Activated T-helper 2 cell treated with anti-CD3 and anti-CD28 coated beads, Interferon-gamma antibody, Interleukin-2, Interleukin-4, amounts not matched to agents 10 μg/mL and 5 μg/mL and 100 μg/mL, durations not matched to agents 14 hours and 24 hours and 36 hours (primary cell): ENCODE measurements at regions of chr2 and their contacts with region 1.

Region 1: GRCh38 chr2:233251306-233252116 is at the start of gene ATG16L1:
- DNase-seq: peak; percentile 94
- H3K4me3 Mint-ChIP-seq: peak within 1 kb of the TSS; percentile 92
- H3K27ac Mint-ChIP-seq: peak within 1 kb of the TSS; percentile 95
- H3K4me1 Mint-ChIP-seq: peaks cover 54% of the 10 kb centered on the region
- H3K27me3 Mint-ChIP-seq: no peaks in the 10 kb centered on the region
- total RNA-seq, gene ATG16L1: 33.5 and 35.5 TPM in 2 replicates

Region 2: DNA sequence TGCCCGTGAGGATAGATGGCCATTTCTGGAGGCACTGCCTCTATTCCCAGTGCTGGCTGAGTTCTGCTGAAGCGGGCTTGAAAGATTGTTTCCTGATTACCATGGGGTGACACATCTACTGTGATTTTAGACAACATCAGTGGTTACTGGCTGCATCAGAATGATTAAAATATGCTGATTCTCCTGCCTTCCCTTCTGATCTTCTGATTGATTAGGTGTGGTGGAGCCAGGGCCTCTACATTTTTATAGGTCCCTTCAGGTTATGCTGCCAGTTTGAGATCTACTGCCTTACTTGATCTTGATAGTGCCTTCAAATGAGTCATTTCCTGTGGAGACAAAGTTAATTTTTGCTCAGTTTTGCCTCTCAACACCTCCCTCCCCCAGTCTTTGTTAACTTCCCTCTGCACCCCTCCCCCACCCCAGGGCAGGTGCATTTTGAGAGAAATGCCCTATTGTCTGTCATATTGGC is 413.1 kb before region 1 on chr2:
- intact Hi-C with region 1: loop called (anchors 5 kb)
- DNase-seq: peak; percentile 46
- H3K4me3 Mint-ChIP-seq: peak overlapping the region; percentile 4
- H3K27ac Mint-ChIP-seq: peak overlapping the region; percentile 72
- H3K4me1 Mint-ChIP-seq: peaks cover 34% of the 10 kb centered on the region
- H3K27me3 Mint-ChIP-seq: no peaks in the 10 kb centered on the region

Region 3: GRCh38 chr2:233061591-233062450 is 189.7 kb before region 1 on chr2:
- intact Hi-C with region 1: loop called (anchors 5 kb)
- DNase-seq: peak; percentile 23
- H3K4me3 Mint-ChIP-seq: peak overlapping the region; percentile 91
- H3K27ac Mint-ChIP-seq: peak overlapping the region; percentile 88
- H3K4me1 Mint-ChIP-seq: peaks cover 38% of the 10 kb centered on the region
- H3K27me3 Mint-ChIP-seq: no peaks in the 10 kb centered on the region

Region 4: DNA sequence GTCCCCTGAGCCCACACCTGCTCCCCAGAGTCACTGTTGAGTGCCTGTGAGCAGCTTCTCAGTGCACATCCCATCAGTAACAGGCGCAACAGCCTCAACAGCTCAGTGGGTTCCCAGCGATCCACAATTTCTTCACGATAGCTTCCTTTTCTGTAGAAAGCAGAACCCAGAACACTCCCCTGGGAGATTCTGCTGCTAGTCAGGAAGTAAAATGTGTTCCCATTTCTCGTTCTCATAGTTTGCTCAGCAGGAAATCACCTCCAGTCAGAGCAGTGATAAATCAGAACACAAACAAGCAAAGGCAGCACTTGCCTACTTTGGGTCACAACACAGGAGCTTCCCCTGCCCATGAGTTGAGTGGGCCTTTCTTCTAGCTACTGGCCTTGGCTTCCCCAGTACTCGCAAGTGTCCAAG is 49.0 kb before region 1 on chr2:
- intact Hi-C with region 1: no loop called
- DNase-seq: no peak
- H3K4me3 Mint-ChIP-seq: no peak overlapping the region
- H3K27ac Mint-ChIP-seq: no peak overlapping the region
- H3K4me1 Mint-ChIP-seq: no peaks in the 10 kb centered on the region
- H3K27me3 Mint-ChIP-seq: no peaks in the 10 kb centered on the region

Region 5: GRCh38 chr2:233234264-233234663 is 17.2 kb before region 1 on chr2:
- intact Hi-C with region 1: loop called (anchors 1 kb)
- DNase-seq: peak; percentile 32
- H3K4me3 Mint-ChIP-seq: peak overlapping the region; percentile 62
- H3K27ac Mint-ChIP-seq: peak overlapping the region; percentile 92
- H3K4me1 Mint-ChIP-seq: peaks cover 62% of the 10 kb centered on the region
- H3K27me3 Mint-ChIP-seq: no peaks in the 10 kb centered on the region